ENCODE measurements at regions of chr10 and their contacts with region 1.

Region 1: DNA sequence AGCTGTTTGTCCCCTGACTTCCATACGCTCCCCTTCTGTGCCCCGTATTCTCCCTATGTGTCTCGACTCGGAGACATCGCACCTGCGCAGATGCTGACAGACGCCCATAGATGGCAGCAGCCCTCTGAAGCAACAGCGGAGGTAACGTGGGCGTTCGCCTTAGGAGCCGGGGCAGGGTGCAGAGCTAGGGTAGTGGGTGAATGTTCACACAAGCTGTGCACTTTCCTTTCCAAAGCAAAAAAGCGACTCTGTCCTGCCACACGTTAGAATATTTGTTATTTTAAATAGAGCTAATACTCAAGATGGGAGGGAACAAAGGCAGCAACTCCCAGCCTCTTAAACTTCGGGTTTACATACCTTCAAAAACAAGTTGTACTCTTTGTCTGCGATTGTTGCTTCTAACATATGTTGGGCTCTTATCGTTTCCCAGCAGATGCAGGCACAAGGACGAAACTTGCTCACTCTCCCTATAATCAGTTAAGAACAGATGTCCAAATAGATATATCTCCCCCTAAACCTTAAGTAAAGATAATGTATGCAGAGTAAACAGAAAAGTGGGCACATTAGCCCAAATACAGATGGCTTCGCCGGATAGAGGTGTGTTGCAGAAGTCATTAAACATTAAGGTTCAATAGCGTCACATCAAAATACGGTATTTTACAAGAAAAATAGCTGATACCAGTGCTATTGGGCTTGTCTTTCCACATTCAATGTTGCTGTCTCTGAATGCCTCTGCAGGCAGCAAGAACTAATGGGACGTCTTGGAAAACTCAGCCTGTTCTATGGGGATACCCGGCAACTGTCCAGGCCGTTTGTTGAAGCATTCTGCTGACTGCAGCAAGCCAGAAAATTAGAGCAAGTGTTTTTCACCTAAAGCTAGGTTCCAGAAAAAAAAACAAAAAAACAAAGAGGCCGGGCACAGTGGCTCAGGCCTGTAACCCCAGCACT is 340.3 kb upstream of the PRKCQ start:
- DNase-seq: peak; percentile 50 to 88 (median 78)
- ATAC-seq: peak; percentile 99
- H3K4me3 ChIP-seq: no peak overlapping the region
- H3K4me3 Mint-ChIP-seq: no peak overlapping the region
- H3K27ac ChIP-seq: no peak overlapping the region
- H3K27ac Mint-ChIP-seq: no peak overlapping the region
- H3K4me1 ChIP-seq: peaks cover 8% of the 10 kb centered on the region
- H3K4me1 Mint-ChIP-seq: peaks cover 20% of the 10 kb centered on the region
- H3K27me3 ChIP-seq: peaks cover 0 to 2% of the 10 kb centered on the region in 2 experiments
- H3K27me3 Mint-ChIP-seq: peaks cover 6% of the 10 kb centered on the region
- CTCF ChIP-seq: peak; percentile 84

Region 2: DNA sequence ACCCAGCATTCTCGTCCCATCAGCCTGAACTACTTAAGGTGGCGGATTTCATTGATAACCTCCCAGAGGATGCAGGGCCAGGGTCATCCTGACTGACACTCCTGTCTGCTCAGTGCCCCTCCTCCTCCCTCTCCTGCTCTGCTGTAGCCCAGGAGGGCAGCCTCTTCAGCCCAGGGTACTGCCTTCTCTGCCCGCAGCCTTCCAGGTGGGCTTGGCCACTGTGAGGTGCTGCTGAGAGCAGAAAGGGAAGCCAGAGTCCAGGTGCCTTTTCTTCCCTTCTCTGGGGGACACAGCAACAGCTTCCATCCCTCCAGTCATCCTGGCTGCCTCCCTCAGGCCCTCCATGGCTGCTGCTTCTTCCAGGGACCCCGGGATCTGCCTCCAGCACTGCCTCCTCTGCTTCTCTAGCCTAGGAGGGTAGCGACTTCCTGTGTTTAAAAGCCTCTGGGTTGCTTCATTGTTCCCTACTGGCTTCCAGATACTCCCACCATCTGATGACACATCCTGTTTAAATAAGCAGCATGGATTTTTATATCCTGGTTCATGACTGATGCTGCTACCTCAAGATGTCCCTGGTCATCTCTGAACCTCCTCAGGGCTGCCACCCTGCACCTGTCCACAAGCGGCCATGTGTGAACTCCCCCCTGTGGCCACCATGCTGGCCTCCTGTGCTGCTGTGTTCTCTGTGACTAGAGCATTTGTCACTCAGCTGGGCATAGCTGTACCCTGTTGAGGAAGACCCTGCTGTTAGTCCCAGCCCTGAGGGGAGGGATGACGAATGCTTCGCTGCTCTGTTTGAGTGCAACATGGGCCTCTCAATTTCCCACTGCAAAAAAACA is 1668.0 kb before region 1 on chr10:
- CTCF ChIA-PET with region 1: no interaction called
- POLR2A ChIA-PET with region 1: no interaction called
- intact Hi-C with region 1: no loop called
- DNase-seq: no peak
- ATAC-seq: no peak
- H3K4me3 ChIP-seq: no peak overlapping the region
- H3K4me3 Mint-ChIP-seq: no peak overlapping the region
- H3K27ac ChIP-seq: no peak overlapping the region
- H3K27ac Mint-ChIP-seq: no peak overlapping the region
- H3K4me1 ChIP-seq: no peaks in the 10 kb centered on the region
- H3K4me1 Mint-ChIP-seq: no peaks in the 10 kb centered on the region
- H3K27me3 ChIP-seq: no peaks in the 10 kb centered on the region
- H3K27me3 Mint-ChIP-seq: no peaks in the 10 kb centered on the region
- CTCF ChIP-seq: no peak

Region 3: GRCh38 chr10:6314620-6315205 is 605.6 kb before region 1 on chr10:
- CTCF ChIA-PET with region 1: no interaction called
- POLR2A ChIA-PET with region 1: no interaction called
- intact Hi-C with region 1: no loop called
- DNase-seq: no peak
- ATAC-seq: no peak
- H3K4me3 ChIP-seq: no peak overlapping the region
- H3K4me3 Mint-ChIP-seq: no peak overlapping the region
- H3K27ac ChIP-seq: no peak overlapping the region
- H3K27ac Mint-ChIP-seq: no peak overlapping the region
- H3K4me1 ChIP-seq: no peaks in the 10 kb centered on the region
- H3K4me1 Mint-ChIP-seq: no peaks in the 10 kb centered on the region
- H3K27me3 ChIP-seq: no peaks in the 10 kb centered on the region
- H3K27me3 Mint-ChIP-seq: no peaks in the 10 kb centered on the region
- CTCF ChIP-seq: no peak

Region 4: GRCh38 chr10:6416892-6417512 is 503.3 kb before region 1 on chr10:
- CTCF ChIA-PET with region 1: interaction called, 3 read pairs
- POLR2A ChIA-PET with region 1: no interaction called
- intact Hi-C with region 1: loop called in 1 of 2 experiments (anchors 10 kb)
- DNase-seq: peak in 2 of 9 experiments; percentile 65 to 75
- ATAC-seq: peak; percentile 72
- H3K4me3 ChIP-seq: no peak overlapping the region
- H3K4me3 Mint-ChIP-seq: no peak overlapping the region
- H3K27ac ChIP-seq: no peak overlapping the region
- H3K27ac Mint-ChIP-seq: no peak overlapping the region
- H3K4me1 ChIP-seq: no peaks in the 10 kb centered on the region
- H3K4me1 Mint-ChIP-seq: no peaks in the 10 kb centered on the region
- H3K27me3 ChIP-seq: no peaks in the 10 kb centered on the region
- H3K27me3 Mint-ChIP-seq: no peaks in the 10 kb centered on the region
- CTCF ChIP-seq: peak; percentile 74

Region 5: GRCh38 chr10:6781133-6781770 is 139.1 kb before region 1 on chr10:
- CTCF ChIA-PET with region 1: no interaction called
- POLR2A ChIA-PET with region 1: no interaction called
- intact Hi-C with region 1: no loop called
- DNase-seq: no peak
- ATAC-seq: no peak
- H3K4me3 ChIP-seq: no peak overlapping the region
- H3K4me3 Mint-ChIP-seq: no peak overlapping the region
- H3K27ac ChIP-seq: no peak overlapping the region
- H3K27ac Mint-ChIP-seq: no peak overlapping the region
- H3K4me1 ChIP-seq: no peaks in the 10 kb centered on the region
- H3K4me1 Mint-ChIP-seq: no peaks in the 10 kb centered on the region
- H3K27me3 ChIP-seq: peaks cover 4 to 5% of the 10 kb centered on the region in 2 experiments
- H3K27me3 Mint-ChIP-seq: peaks cover 26% of the 10 kb centered on the region
- CTCF ChIP-seq: no peak

Region 6: DNA sequence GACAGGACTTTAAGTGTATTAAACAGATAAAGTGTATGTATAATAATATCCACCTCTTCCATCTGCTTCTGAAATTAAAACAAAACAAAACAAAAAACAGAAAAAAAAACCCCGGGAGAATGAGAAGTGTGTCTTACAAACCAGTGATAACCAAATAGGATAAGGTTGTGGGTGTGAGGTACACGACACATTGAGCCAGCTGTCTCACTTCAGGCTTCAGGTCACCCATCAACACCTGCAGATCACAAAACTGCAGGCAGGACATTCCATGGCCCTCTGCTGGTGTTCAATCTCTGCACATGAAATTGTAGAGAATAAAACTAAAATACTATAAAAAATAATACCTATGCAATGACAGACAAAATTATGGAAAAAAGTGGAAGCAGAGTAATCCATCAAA is 150.6 kb after region 1 on chr10:
- CTCF ChIA-PET with region 1: interaction called, 3 read pairs
- POLR2A ChIA-PET with region 1: no interaction called
- intact Hi-C with region 1: loop called in 1 of 2 experiments (anchors 5 kb)
- DNase-seq: peak in 2 of 9 experiments; percentile 25 to 47
- ATAC-seq: no peak
- H3K4me3 ChIP-seq: no peak overlapping the region
- H3K4me3 Mint-ChIP-seq: no peak overlapping the region
- H3K27ac ChIP-seq: no peak overlapping the region
- H3K27ac Mint-ChIP-seq: no peak overlapping the region
- H3K4me1 ChIP-seq: no peaks in the 10 kb centered on the region
- H3K4me1 Mint-ChIP-seq: no peaks in the 10 kb centered on the region
- H3K27me3 ChIP-seq: no peaks in the 10 kb centered on the region
- H3K27me3 Mint-ChIP-seq: no peaks in the 10 kb centered on the region
- CTCF ChIP-seq: no peak

Region 7: GRCh38 chr10:7192831-7193361 is 272.6 kb after region 1 on chr10:
- CTCF ChIA-PET with region 1: interaction called, 3 read pairs
- POLR2A ChIA-PET with region 1: no interaction called
- intact Hi-C with region 1: loop called in 1 of 2 experiments (anchors 10 kb)
- DNase-seq: peak; percentile 28 to 87 (median 68)
- ATAC-seq: peak; percentile 87
- H3K4me3 ChIP-seq: peak overlapping the region; percentile 16 to 36
- H3K4me3 Mint-ChIP-seq: peak overlapping the region; percentile 82
- H3K27ac ChIP-seq: peak overlapping the region; percentile 55 to 64
- H3K27ac Mint-ChIP-seq: peak overlapping the region; percentile 98
- H3K4me1 ChIP-seq: peaks cover 66% of the 10 kb centered on the region
- H3K4me1 Mint-ChIP-seq: peaks cover 67% of the 10 kb centered on the region
- H3K27me3 ChIP-seq: no peaks in the 10 kb centered on the region
- H3K27me3 Mint-ChIP-seq: no peaks in the 10 kb centered on the region
- CTCF ChIP-seq: no peak

Region 8: DNA sequence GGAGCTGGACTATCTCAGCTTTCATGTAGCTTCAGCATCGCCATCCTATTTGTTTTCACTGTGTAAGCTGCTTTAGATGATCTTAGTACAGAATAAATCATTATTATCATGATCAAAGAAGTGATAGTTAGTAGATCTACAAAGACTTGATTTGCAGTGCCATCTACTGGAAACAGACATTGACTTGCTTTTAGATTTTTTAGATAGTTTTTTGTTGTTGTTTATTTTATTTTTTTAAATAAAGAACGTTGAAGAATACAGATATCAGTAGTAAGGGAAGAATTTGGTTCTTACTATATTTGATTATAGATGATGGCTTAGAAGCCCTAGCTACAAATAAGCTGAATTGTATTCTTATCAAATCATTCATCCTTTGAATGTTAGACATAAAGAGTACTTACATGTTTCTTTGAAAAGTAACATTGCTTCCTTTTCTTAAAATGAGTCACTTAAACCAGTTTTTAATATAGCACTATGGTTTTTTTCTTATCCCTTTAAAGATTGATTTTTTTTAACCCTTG is 496.8 kb after region 1 on chr10:
- CTCF ChIA-PET with region 1: interaction called, 136 read pairs
- POLR2A ChIA-PET with region 1: no interaction called
- intact Hi-C with region 1: loop called (anchors 1 kb)
- DNase-seq: peak in 2 of 9 experiments; percentile 70 to 77
- ATAC-seq: peak; percentile 55
- H3K4me3 ChIP-seq: no peak overlapping the region
- H3K4me3 Mint-ChIP-seq: no peak overlapping the region
- H3K27ac ChIP-seq: no peak overlapping the region
- H3K27ac Mint-ChIP-seq: no peak overlapping the region
- H3K4me1 ChIP-seq: peaks cover 7% of the 10 kb centered on the region
- H3K4me1 Mint-ChIP-seq: peaks cover 20% of the 10 kb centered on the region
- H3K27me3 ChIP-seq: peaks cover 0 to 4% of the 10 kb centered on the region in 2 experiments
- H3K27me3 Mint-ChIP-seq: no peaks in the 10 kb centered on the region
- CTCF ChIP-seq: peak; percentile 81

Region 9: GRCh38 chr10:7687228-7687907 is 767.0 kb after region 1 on chr10:
- CTCF ChIA-PET with region 1: interaction called, 17 read pairs
- POLR2A ChIA-PET with region 1: no interaction called
- intact Hi-C with region 1: loop called (anchors 1 to 2 kb)
- DNase-seq: peak; percentile 55 to 89 (median 72)
- ATAC-seq: peak; percentile 94
- H3K4me3 ChIP-seq: no peak overlapping the region
- H3K4me3 Mint-ChIP-seq: no peak overlapping the region
- H3K27ac ChIP-seq: no peak overlapping the region
- H3K27ac Mint-ChIP-seq: no peak overlapping the region
- H3K4me1 ChIP-seq: no peaks in the 10 kb centered on the region
- H3K4me1 Mint-ChIP-seq: peaks cover 4% of the 10 kb centered on the region
- H3K27me3 ChIP-seq: no peaks in the 10 kb centered on the region
- H3K27me3 Mint-ChIP-seq: peaks cover 4% of the 10 kb centered on the region
- CTCF ChIP-seq: peak; percentile 69